Dendritic cell treated with granulocyte-macrophage colony-stimulating factor and Interleukin-4, amounts not matched to agents 40 ng/mL and 50 ng/mL, for 4 days (primary cell): ENCODE measurements at regions of chr19 and their contacts with region 1.

Region 1: GRCh38 chr19:52296773-52297600 is at the start of gene ZNF480:
- H3K4me3 Mint-ChIP-seq: peak within 1 kb of the TSS; percentile 86
- H3K27ac Mint-ChIP-seq: peak within 1 kb of the TSS; percentile 91
- H3K4me1 Mint-ChIP-seq: peaks cover 18% of the 10 kb centered on the region
- H3K27me3 Mint-ChIP-seq: no peaks in the 10 kb centered on the region

Region 2: DNA sequence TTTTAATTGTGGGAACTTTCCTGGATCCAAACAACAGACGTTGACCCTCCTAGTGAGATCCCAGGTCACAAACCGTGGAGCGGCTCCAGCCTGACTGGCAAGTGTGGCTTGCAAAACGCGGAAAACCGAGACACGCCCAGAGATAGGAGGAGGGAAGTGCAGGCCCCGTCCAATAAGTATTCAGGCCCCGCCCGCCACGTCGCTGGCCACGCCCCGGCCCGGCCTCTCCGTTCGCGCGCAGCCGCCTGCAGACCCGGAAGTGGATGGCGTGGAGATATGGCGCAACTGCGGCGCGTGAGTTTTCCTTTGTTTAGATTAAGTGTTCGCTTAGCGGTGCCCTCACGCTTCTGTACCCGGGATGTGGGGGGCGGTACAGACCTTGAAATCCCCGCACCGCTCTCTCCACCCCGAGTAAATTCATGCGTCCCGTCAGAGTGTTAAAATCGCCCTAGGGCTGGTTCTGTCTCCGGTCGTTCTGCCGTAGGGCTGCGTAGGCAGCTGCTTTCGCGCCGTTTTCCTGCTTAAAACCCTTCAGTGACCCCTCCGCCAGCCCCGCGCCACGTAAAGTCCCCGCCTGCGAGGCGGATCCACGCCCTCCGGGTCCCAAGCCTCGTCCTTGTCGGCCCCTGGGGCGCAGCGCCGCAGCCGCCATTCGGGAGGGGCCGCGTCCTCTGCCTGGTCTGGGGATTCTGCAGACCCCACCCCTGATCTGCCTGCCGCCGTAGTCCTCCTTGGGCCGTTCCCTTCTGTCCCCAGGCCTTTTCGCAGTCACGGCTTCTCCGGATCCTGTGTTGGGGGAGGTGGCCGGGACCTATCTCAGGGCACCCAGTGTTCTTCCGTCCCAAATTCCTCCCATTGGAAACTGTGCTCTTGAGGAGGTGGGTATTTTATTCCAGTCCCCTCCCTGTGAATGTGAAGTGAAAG is 27.4 kb before region 1 on chr19 and contains the start of gene ZNF766:
- intact Hi-C with region 1: loop called (anchors 2 kb)
- H3K4me3 Mint-ChIP-seq: peak within 1 kb of the TSS; percentile 95
- H3K27ac Mint-ChIP-seq: peak within 1 kb of the TSS; percentile 93
- H3K4me1 Mint-ChIP-seq: peaks cover 13% of the 10 kb centered on the region
- H3K27me3 Mint-ChIP-seq: no peaks in the 10 kb centered on the region